ENCODE measurements at regions of chr17 and their contacts with region 1.

Region 1: GRCh38 chr17:29124117-29124924 is 55.9 kb downstream of the MYO18A start:
- DNase-seq: peak; percentile 80
- H3K4me3 ChIP-seq: no peak overlapping the region; a peak in 1 of 4 replicates
- H3K27ac ChIP-seq: no peak overlapping the region
- H3K4me1 ChIP-seq: peaks cover 0 to 3% of the 10 kb centered on the region in 2 experiments; a peak in 1 of 4 replicates
- H3K27me3 ChIP-seq: no peaks in the 10 kb centered on the region
- CTCF ChIP-seq: peak; percentile 76
- EP300 ChIP-seq: no peak
- RAD21 ChIP-seq: peak; percentile 95

Region 2: GRCh38 chr17:28973425-28973824 is 150.9 kb before region 1 on chr17:
- CTCF ChIA-PET with region 1: interaction called, 341 read pairs
- POLR2A ChIA-PET with region 1: interaction called, 3 read pairs
- DNase-seq: peak; percentile 86
- H3K4me3 ChIP-seq: no peak overlapping the region
- H3K27ac ChIP-seq: peak overlapping the region in 1 of 2 experiments; percentile 96; a peak in 2 of 4 replicates
- H3K4me1 ChIP-seq: peaks cover 0 to 85% of the 10 kb centered on the region in 2 experiments; a peak in 3 of 4 replicates
- H3K27me3 ChIP-seq: peaks cover 4% of the 10 kb centered on the region; the same call in 1 of the 2 replicates
- CTCF ChIP-seq: no peak
- EP300 ChIP-seq: peak in 1 of 2 experiments; percentile 95; a peak in 2 of 4 replicates
- RAD21 ChIP-seq: peak; percentile 56

Region 3: GRCh38 chr17:29162738-29163341 is 38.5 kb after region 1 on chr17:
- CTCF ChIA-PET with region 1: interaction called, 21 read pairs
- POLR2A ChIA-PET with region 1: no interaction called
- DNase-seq: no peak
- H3K4me3 ChIP-seq: no peak overlapping the region
- H3K27ac ChIP-seq: no peak overlapping the region; a peak in 1 of 4 replicates
- H3K4me1 ChIP-seq: peaks cover 22 to 27% of the 10 kb centered on the region in 2 experiments; a peak in 2 of 4 replicates
- H3K27me3 ChIP-seq: no peaks in the 10 kb centered on the region
- CTCF ChIP-seq: no peak
- EP300 ChIP-seq: no peak
- RAD21 ChIP-seq: no peak

Region 4: GRCh38 chr17:29219378-29220047 is 95.2 kb after region 1 on chr17:
- CTCF ChIA-PET with region 1: interaction called, 125 read pairs
- POLR2A ChIA-PET with region 1: no interaction called
- DNase-seq: peak; percentile 86
- H3K4me3 ChIP-seq: peak overlapping the region in 1 of 2 experiments; percentile 17; a peak in 1 of 4 replicates
- H3K27ac ChIP-seq: no peak overlapping the region
- H3K4me1 ChIP-seq: peaks cover 0 to 6% of the 10 kb centered on the region in 2 experiments; a peak in 1 of 4 replicates
- H3K27me3 ChIP-seq: no peaks in the 10 kb centered on the region
- CTCF ChIP-seq: peak; percentile 97
- EP300 ChIP-seq: no peak; a peak in 1 of 4 replicates
- RAD21 ChIP-seq: peak; percentile 75

Region 5: GRCh38 chr17:29241015-29241963 is 117.0 kb after region 1 on chr17:
- CTCF ChIA-PET with region 1: interaction called, 12 read pairs
- POLR2A ChIA-PET with region 1: no interaction called
- DNase-seq: peak; percentile 39
- H3K4me3 ChIP-seq: no peak overlapping the region
- H3K27ac ChIP-seq: peak overlapping the region; percentile 80 to 93
- H3K4me1 ChIP-seq: peaks cover 23 to 28% of the 10 kb centered on the region in 2 experiments
- H3K27me3 ChIP-seq: no peaks in the 10 kb centered on the region
- CTCF ChIP-seq: peak; percentile 26
- EP300 ChIP-seq: peak in 1 of 2 experiments; percentile 72; a peak in 2 of 4 replicates
- RAD21 ChIP-seq: peak; percentile 31

Region 6: GRCh38 chr17:29292992-29293889 is 168.9 kb after region 1 on chr17:
- CTCF ChIA-PET with region 1: interaction called, 21 read pairs
- POLR2A ChIA-PET with region 1: no interaction called
- DNase-seq: peak; percentile 67
- H3K4me3 ChIP-seq: peak overlapping the region; percentile 87 to 99
- H3K27ac ChIP-seq: peak overlapping the region; percentile 94 to 95
- H3K4me1 ChIP-seq: peaks cover 15 to 22% of the 10 kb centered on the region in 2 experiments; a peak in 3 of 4 replicates
- H3K27me3 ChIP-seq: no peaks in the 10 kb centered on the region
- CTCF ChIP-seq: no peak
- EP300 ChIP-seq: peak in 1 of 2 experiments; percentile 19; a peak in 1 of 4 replicates
- RAD21 ChIP-seq: no peak

Measured in SK-N-SH (cell line).